Activated T-helper 2 cell treated with anti-CD3 and anti-CD28 coated beads, Interferon-gamma antibody, Interleukin-2, Interleukin-4, amounts not matched to agents 10 μg/mL and 5 μg/mL and 100 μg/mL, durations not matched to agents 14 hours and 24 hours and 36 hours (primary cell): ENCODE measurements at regions of chr3 and their contacts with region 1.

Region 1: DNA sequence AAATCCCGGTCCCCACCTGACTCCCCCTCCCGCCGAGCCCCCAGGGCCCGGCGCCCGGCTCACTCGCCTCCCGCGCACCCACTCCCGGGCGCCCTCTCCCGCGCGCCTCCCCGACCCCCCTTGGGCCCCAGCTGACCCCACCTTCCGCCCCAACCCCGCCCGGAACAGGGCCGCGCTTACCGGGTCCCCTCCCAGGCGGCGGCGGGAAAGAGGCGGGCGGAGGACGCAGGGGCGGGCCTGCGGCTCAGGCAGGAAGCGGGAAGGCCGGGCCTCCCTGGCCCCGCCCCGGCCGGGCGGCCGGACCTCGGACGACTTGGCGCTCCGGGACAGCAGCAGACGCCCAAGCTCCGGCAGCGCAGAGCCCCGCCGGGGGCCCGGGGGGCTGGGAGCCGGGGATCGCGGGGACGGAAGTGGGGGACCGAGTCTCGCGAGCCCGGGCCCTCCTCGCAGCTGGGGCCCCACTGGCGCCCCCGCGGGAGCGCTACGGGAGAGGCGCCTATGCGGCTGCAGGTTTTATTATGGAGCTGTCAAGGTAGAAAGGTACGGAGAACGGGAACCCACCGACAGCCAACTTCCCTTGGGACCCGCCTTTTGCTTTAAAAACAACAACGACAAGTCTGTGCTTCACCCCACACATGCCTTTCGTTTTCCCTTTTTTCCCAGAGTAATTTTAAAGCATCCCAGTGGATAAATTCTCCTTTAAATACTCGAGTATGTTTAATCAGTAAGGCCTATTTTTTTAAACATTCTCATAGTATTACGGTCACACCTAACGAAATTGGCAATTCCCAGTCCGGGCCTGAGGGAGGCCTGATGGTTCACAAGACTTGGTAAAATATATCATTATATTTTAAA is at the start of gene SLC41A3:
- DNase-seq: peak; percentile 86
- H3K4me3 Mint-ChIP-seq: peak within 1 kb of the TSS; percentile 92
- H3K27ac Mint-ChIP-seq: peak within 1 kb of the TSS; percentile 82
- H3K4me1 Mint-ChIP-seq: peaks cover 14% of the 10 kb centered on the region
- H3K27me3 Mint-ChIP-seq: no peaks in the 10 kb centered on the region
- total RNA-seq, gene SLC41A3: 13.1 and 14.7 TPM in 2 replicates

Region 2: GRCh38 chr3:125990253-125990970 is 93.7 kb before region 1 on chr3:
- intact Hi-C with region 1: loop called (anchors 1 kb)
- DNase-seq: peak; percentile 64
- H3K4me3 Mint-ChIP-seq: peak overlapping the region; percentile 97
- H3K27ac Mint-ChIP-seq: peak overlapping the region; percentile 93
- H3K4me1 Mint-ChIP-seq: peaks cover 11% of the 10 kb centered on the region
- H3K27me3 Mint-ChIP-seq: peaks cover 27% of the 10 kb centered on the region